ENCODE measurements at regions of chr9 and their contacts with region 1.

Region 1: GRCh38 chr9:134449221-134449894 is 123.1 kb downstream of the RXRA start:
- DNase-seq: peak; percentile 68
- ATAC-seq: peak; percentile 96
- H3K4me3 ChIP-seq: no peak overlapping the region
- H3K27ac ChIP-seq: no peak overlapping the region
- H3K4me1 ChIP-seq: no peaks in the 10 kb centered on the region
- H3K27me3 ChIP-seq: no peaks in the 10 kb centered on the region
- CTCF ChIP-seq: peak; percentile 59 to 81 (median 62)
- POLR2A ChIP-seq: no peak
- RAD21 ChIP-seq: peak; percentile 92

Region 2: DNA sequence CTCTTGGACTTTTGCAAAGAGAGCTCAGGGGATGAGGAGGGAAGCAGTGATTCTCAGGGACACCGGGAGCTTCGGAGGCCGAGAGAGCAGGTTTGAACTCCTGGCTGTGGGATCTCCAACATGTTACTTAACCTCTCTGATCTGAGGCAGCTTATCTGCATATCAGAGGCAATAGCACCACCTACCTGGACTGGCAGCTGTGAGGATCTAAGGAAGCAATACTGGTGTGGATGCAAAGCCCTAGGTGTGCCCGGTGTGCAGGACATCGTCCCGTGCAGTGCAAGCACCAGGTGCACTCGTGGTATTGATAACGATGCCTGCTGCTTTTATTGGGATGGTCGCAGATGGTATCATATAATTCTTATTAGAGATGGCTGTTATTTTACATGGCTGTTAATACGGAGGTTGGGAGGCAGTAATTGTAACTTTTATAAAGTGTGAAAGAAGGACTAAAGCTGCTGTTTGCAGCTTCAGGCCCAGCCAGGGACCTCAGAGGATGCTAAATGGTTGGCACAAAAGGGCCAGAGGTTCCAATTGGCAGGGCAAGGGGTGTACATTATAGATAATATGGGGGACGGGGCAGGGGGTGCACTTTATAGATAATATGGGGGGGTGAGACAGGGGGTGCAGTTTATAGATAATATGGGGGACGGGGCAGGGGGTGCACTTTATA is 207.1 kb after region 1 on chr9:
- CTCF ChIA-PET with region 1: interaction called, 13 read pairs
- POLR2A ChIA-PET with region 1: no interaction called
- RAD21 ChIA-PET with region 1: no interaction called
- intact Hi-C with region 1: loop called (anchors 1 kb)
- DNase-seq: peak; percentile 31
- ATAC-seq: peak; percentile 86
- H3K4me3 ChIP-seq: no peak overlapping the region
- H3K27ac ChIP-seq: no peak overlapping the region
- H3K4me1 ChIP-seq: no peaks in the 10 kb centered on the region
- H3K27me3 ChIP-seq: no peaks in the 10 kb centered on the region
- CTCF ChIP-seq: peak; percentile 21 to 51 (median 32); a peak in 3 of 6 replicates
- POLR2A ChIP-seq: no peak
- RAD21 ChIP-seq: peak; percentile 78

Region 3: GRCh38 chr9:134670042-134670525 is 220.7 kb after region 1 on chr9:
- CTCF ChIA-PET with region 1: no interaction called
- POLR2A ChIA-PET with region 1: no interaction called
- RAD21 ChIA-PET with region 1: no interaction called
- intact Hi-C with region 1: no loop called
- DNase-seq: no peak
- ATAC-seq: no peak
- H3K4me3 ChIP-seq: no peak overlapping the region
- H3K27ac ChIP-seq: no peak overlapping the region
- H3K4me1 ChIP-seq: peaks cover 2 to 14% of the 10 kb centered on the region in 2 experiments; a peak in 2 of 4 replicates
- H3K27me3 ChIP-seq: peaks cover 24% of the 10 kb centered on the region; the same call in 1 of the 2 replicates
- CTCF ChIP-seq: no peak
- POLR2A ChIP-seq: no peak
- RAD21 ChIP-seq: no peak

Region 4: GRCh38 chr9:134698587-134699342 is 249.4 kb after region 1 on chr9:
- CTCF ChIA-PET with region 1: interaction called, 3 read pairs
- POLR2A ChIA-PET with region 1: no interaction called
- RAD21 ChIA-PET with region 1: no interaction called
- intact Hi-C with region 1: loop called (anchors 5 kb)
- DNase-seq: peak; percentile 39
- ATAC-seq: peak; percentile 94
- H3K4me3 ChIP-seq: no peak overlapping the region
- H3K27ac ChIP-seq: no peak overlapping the region
- H3K4me1 ChIP-seq: peaks cover 0 to 2% of the 10 kb centered on the region in 2 experiments; a peak in 1 of 4 replicates
- H3K27me3 ChIP-seq: no peaks in the 10 kb centered on the region
- CTCF ChIP-seq: peak; percentile 89 to 94 (median 91)
- POLR2A ChIP-seq: no peak
- RAD21 ChIP-seq: peak; percentile 91

Region 5: DNA sequence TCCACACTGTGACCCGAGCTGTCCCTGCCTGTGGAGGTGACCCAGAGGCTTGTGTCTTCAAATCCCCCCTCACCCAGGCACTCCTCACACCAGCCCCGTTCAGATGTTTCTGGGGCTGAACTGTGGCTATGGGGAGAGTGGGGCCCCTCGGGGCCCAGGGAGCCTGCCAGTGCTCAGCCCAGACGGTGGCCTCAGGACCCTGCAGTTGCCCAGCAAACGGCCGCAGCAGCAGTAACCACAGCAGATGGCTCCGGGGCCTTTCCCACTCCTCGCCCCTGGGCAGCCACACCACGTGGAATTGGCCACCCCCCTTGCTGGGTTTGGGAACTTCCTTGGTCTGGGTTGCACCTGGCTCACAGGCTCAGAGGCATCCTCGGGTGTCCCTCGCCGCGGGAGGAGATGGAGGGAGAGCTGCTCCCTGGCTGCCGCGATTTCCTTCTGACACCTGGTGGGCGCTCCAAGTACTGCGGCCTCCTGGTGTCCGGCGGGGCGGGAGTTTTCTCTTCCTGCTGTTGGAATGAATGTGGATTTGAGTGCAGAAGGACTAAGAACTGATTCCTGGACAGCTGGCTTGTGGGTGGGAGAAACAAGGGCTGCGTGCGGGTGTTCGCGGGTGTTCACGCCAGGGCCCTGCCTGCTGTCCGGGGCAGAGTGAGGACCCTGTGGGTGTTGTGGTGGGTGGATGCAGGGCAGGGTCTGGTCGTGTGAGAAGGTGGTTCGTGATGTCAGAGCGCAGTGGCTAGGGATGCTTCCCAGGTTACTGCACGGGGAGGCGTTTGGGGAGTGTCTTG is 289.7 kb after region 1 on chr9:
- CTCF ChIA-PET with region 1: interaction called, 9 read pairs
- POLR2A ChIA-PET with region 1: no interaction called
- RAD21 ChIA-PET with region 1: no interaction called
- intact Hi-C with region 1: loop called (anchors 1 kb)
- DNase-seq: peak; percentile 12
- ATAC-seq: peak; percentile 87
- H3K4me3 ChIP-seq: no peak overlapping the region
- H3K27ac ChIP-seq: no peak overlapping the region
- H3K4me1 ChIP-seq: peaks cover 0 to 4% of the 10 kb centered on the region in 2 experiments; a peak in 1 of 4 replicates
- H3K27me3 ChIP-seq: no peaks in the 10 kb centered on the region
- CTCF ChIP-seq: peak; percentile 81 to 87 (median 86)
- POLR2A ChIP-seq: no peak
- RAD21 ChIP-seq: peak; percentile 91